ENCODE measurements at regions of chr6 and their contacts with region 1.

Region 1: DNA sequence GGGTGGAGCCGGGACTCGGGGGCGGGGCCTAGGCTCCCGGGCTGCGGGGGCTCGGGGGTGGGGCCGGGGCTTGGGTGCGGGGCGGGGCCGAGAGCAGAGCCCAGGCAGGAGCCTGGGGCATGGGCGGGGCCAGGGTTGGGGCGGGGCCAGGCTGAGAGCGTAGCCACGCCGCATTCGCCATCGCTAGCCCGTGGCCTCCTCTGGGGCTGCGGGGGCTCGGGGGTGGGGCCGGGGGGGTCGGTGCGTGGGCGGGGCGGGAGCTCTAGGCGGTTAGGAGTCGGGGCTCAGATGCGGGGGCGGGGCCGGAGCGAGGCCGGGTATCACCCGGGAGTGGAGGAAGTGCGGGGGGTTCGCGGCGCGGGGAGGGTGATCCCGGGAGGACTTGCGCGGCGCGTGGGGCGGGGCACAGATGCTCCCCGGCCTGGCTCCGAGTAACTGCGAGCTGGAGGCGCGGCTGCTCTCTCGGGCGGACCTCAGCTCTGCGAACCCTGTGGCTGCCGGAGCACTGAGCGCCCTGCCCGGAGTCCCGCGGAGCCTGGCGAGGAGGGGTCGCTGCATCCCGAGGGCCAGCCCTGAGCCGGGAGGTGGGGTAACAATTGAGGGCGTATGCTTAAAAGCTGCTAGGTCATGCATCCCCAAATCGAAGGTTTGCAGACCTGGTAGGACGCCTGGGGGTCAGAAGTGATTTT is 434 bp upstream of the ECI2 start:
- DNase-seq: peak; percentile 88
- H3K4me3 Mint-ChIP-seq: peak overlapping the region; percentile 83
- H3K27ac Mint-ChIP-seq: peak overlapping the region; percentile 80
- H3K4me1 Mint-ChIP-seq: peaks cover 27% of the 10 kb centered on the region
- H3K27me3 Mint-ChIP-seq: peaks cover 4% of the 10 kb centered on the region

Region 2: GRCh38 chr6:3068329-3069214 is 1067.2 kb before region 1 on chr6 and contains the start of gene RIPK1:
- intact Hi-C with region 1: loop called (anchors 10 kb)
- DNase-seq: peak; percentile 96
- H3K4me3 Mint-ChIP-seq: peak within 1 kb of the TSS; percentile 93
- H3K27ac Mint-ChIP-seq: peak within 1 kb of the TSS; percentile 96
- H3K4me1 Mint-ChIP-seq: peaks cover 58% of the 10 kb centered on the region
- H3K27me3 Mint-ChIP-seq: no peaks in the 10 kb centered on the region
- total RNA-seq, gene RIPK1: 17.1 and 19.4 TPM in 2 replicates

Region 3: GRCh38 chr6:3748208-3749066 is 387.4 kb before region 1 on chr6:
- intact Hi-C with region 1: loop called (anchors 5 kb)
- DNase-seq: no peak
- H3K4me3 Mint-ChIP-seq: no peak overlapping the region
- H3K27ac Mint-ChIP-seq: no peak overlapping the region
- H3K4me1 Mint-ChIP-seq: peaks cover 6% of the 10 kb centered on the region
- H3K27me3 Mint-ChIP-seq: peaks cover 40% of the 10 kb centered on the region

Region 4: DNA sequence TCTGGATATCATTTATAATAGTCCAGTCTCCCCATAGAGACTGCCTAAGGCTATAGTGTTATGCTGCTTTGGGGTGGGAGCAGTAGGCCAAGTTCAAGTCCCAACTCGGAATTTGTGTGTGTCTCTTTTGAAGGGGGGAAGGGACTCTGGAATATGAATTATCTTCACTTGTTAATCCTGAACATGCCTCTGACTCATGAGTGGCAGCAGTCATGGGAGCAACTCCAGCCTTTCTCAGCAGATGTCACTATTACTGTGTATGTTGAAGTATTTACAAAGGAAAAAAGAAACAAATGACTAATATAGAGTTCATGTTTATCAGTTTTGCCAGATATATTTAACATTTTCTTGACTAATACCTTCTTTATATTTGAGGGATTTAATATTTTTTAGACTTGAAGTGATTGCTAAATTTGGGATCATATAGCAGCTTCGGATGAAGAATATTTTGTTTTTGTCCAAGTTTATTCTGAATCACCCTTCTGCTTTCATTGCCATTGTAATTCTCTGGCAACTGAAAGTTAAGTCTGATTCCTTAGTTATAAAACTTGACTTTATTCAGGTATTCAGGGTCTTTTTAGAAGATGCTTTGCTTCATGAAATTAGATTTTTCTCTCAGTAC is 80.3 kb before region 1 on chr6:
- intact Hi-C with region 1: loop called (anchors 1 kb)
- DNase-seq: no peak
- H3K4me3 Mint-ChIP-seq: no peak overlapping the region
- H3K27ac Mint-ChIP-seq: no peak overlapping the region
- H3K4me1 Mint-ChIP-seq: peaks cover 41% of the 10 kb centered on the region
- H3K27me3 Mint-ChIP-seq: no peaks in the 10 kb centered on the region

Region 5: GRCh38 chr6:4775584-4776494 is 640.0 kb after region 1 on chr6 and contains the start of gene CDYL:
- intact Hi-C with region 1: loop called (anchors 5 kb)
- DNase-seq: peak; percentile 87
- H3K4me3 Mint-ChIP-seq: peak within 1 kb of the TSS; percentile 89
- H3K27ac Mint-ChIP-seq: peak within 1 kb of the TSS; percentile 83
- H3K4me1 Mint-ChIP-seq: peaks cover 47% of the 10 kb centered on the region
- H3K27me3 Mint-ChIP-seq: peaks cover 34% of the 10 kb centered on the region
- total RNA-seq, gene CDYL: 26.8 and 29.5 TPM in 2 replicates

Region 6: DNA sequence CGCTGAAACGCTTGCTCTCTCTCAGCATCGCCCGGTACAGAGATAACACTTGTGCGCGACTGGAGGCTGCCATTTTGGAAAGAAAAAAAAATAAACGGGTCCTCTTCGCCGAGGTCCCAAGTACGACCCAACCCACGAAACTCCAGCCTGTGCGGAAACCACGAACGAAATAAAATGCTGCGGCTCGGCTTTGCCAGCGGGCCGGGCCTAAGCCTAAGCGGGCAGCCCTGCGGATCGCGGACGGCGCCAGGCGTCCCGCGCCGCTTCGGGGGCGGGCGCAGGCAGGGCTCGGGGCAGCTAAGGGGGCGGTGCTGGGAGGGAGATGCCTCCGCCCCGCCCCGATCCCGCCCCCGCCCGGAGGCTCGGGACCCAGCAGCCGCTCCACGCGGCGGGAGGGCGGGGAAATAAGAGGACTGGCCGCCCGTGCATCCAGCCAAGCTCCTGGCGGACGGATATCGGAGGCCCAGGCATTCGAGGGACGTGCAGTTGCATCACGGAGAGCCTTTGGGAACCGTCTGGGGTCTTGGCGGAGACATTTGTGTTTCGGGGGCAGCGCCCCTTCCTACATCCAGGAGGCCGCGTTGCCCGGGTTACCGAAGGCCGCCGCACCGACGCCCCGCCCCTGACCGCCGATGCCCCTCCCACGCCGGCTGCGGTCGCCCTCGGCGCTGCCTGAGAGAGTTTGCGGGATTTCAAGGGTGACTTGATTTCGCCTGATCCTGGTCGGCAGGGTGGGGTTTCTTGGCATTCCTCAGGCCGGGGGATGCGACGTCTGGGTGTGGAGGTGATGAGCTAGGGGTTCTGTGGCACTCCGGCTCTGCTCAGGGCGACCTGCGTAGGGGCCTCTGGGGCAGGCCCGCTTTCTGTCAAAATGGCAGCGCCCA is 1125.1 kb after region 1 on chr6 and contains the starts of genes FARS2 and LYRM4:
- intact Hi-C with region 1: loop called (anchors 1 kb)
- DNase-seq: peak; percentile 89
- H3K4me3 Mint-ChIP-seq: peak within 1 kb of the TSS; percentile 93
- H3K27ac Mint-ChIP-seq: peak within 1 kb of the TSS; percentile 100
- H3K4me1 Mint-ChIP-seq: peaks cover 41% of the 10 kb centered on the region
- H3K27me3 Mint-ChIP-seq: no peaks in the 10 kb centered on the region
- total RNA-seq, gene FARS2: 20.8 and 23.8 TPM in 2 replicates
- total RNA-seq, gene LYRM4: 47.1 and 48.9 TPM in 2 replicates

Measured in activated T-helper 1 cell treated with anti-CD3 and anti-CD28 coated beads, Interleukin-12 subunit alpha, Interleukin-12 subunit beta, Interleukin-2, Interleukin-4 antibody, amounts not matched to agents 30 ng/mL and 10 ng/mL and 1 ng/mL, durations not matched to agents 14 hours and 24 hours and 36 hours (primary cell).